ENCODE measurements at regions of chr1 and their contacts with region 1.

Region 1: GRCh38 chr1:39833121-39833520 is 44.5 kb upstream of the BMP8B start:
- DNase-seq: no peak
- H3K4me3 ChIP-seq: no peak overlapping the region
- H3K27ac ChIP-seq: no peak overlapping the region
- H3K4me1 ChIP-seq: peaks cover 5 to 8% of the 10 kb centered on the region in 2 experiments; a peak in 2 of 4 replicates
- H3K27me3 ChIP-seq: no peaks in the 10 kb centered on the region
- CTCF ChIP-seq: no peak
- EP300 ChIP-seq: no peak
- RAD21 ChIP-seq: no peak

Region 2: GRCh38 chr1:39754906-39755504 is 78.1 kb before region 1 on chr1:
- CTCF ChIA-PET with region 1: no interaction called
- POLR2A ChIA-PET with region 1: no interaction called
- DNase-seq: no peak
- H3K4me3 ChIP-seq: no peak overlapping the region
- H3K27ac ChIP-seq: no peak overlapping the region
- H3K4me1 ChIP-seq: no peaks in the 10 kb centered on the region; a peak in 1 of 4 replicates
- H3K27me3 ChIP-seq: no peaks in the 10 kb centered on the region
- CTCF ChIP-seq: no peak
- EP300 ChIP-seq: no peak
- RAD21 ChIP-seq: no peak

Region 3: GRCh38 chr1:39845275-39846116 is 12.4 kb after region 1 on chr1:
- CTCF ChIA-PET with region 1: interaction called, 11 read pairs
- POLR2A ChIA-PET with region 1: no interaction called
- DNase-seq: peak; percentile 84
- H3K4me3 ChIP-seq: no peak overlapping the region
- H3K27ac ChIP-seq: peak overlapping the region; percentile 59 to 76; a peak in 3 of 4 replicates
- H3K4me1 ChIP-seq: peaks cover 13 to 18% of the 10 kb centered on the region in 2 experiments
- H3K27me3 ChIP-seq: no peaks in the 10 kb centered on the region
- CTCF ChIP-seq: no peak
- EP300 ChIP-seq: no peak
- RAD21 ChIP-seq: peak; percentile 26

Region 4: GRCh38 chr1:40114400-40114799 is 281.3 kb after region 1 on chr1:
- CTCF ChIA-PET with region 1: no interaction called
- POLR2A ChIA-PET with region 1: no interaction called
- DNase-seq: no peak
- H3K4me3 ChIP-seq: no peak overlapping the region
- H3K27ac ChIP-seq: no peak overlapping the region
- H3K4me1 ChIP-seq: no peaks in the 10 kb centered on the region
- H3K27me3 ChIP-seq: peaks cover 22% of the 10 kb centered on the region; the same call in 1 of the 2 replicates
- CTCF ChIP-seq: no peak
- EP300 ChIP-seq: no peak
- RAD21 ChIP-seq: no peak